CD8-positive, alpha-beta T cell (primary cell): ENCODE measurements at regions of chr12 and their contacts with region 1.

Region 1: DNA sequence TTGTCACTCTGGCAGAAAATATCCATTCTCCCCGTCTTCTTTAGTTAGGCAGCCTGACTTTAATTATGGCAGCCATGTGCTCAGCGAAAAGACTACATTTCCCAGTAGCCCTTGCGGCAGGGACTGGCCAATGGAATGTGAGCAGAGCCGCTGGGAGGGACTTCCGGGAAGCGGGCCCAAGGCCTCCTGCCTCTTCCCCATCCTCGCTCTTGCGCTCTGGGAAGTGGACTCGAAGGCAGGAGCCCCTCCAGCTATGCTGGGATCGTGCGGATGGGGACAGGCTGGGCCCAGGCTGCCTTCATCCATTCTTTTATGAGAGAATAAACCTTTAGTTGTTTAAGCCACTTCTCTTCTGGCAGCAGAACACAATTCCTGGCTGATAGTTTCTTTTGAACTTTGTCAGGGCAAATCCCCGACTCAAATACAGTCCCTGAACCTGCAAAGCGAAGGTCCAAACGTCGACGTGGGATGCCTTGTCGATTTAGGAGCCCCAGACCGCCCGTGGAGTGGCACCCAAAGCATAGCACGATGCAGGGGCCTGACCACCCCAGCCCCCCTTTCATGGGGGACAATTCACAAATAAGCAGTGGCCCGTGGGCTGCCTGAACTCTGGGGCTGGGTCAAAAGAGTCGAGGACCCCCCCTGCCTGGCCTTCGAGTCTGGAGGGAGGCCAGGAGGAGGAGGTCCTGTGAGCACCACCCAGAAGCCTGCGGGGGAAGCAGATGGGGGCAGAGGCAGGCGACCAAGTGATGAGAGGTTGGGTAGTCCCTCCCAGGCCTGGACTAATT is 15.6 kb upstream of the LRTM2 start:
- DNase-seq: peak; percentile 69 to 93 (median 87)
- ATAC-seq: peak; percentile 97
- H3K4me3 ChIP-seq: no peak overlapping the region
- H3K4me3 Mint-ChIP-seq: no peak overlapping the region
- H3K27ac ChIP-seq: peak overlapping the region in 1 of 2 experiments; percentile 66
- H3K27ac Mint-ChIP-seq: peak overlapping the region; percentile 73
- H3K4me1 ChIP-seq: peaks cover 6% of the 10 kb centered on the region
- H3K4me1 Mint-ChIP-seq: peaks cover 10% of the 10 kb centered on the region
- H3K27me3 ChIP-seq: no peaks in the 10 kb centered on the region
- H3K27me3 Mint-ChIP-seq: no peaks in the 10 kb centered on the region
- CTCF ChIP-seq: no peak

Region 2: DNA sequence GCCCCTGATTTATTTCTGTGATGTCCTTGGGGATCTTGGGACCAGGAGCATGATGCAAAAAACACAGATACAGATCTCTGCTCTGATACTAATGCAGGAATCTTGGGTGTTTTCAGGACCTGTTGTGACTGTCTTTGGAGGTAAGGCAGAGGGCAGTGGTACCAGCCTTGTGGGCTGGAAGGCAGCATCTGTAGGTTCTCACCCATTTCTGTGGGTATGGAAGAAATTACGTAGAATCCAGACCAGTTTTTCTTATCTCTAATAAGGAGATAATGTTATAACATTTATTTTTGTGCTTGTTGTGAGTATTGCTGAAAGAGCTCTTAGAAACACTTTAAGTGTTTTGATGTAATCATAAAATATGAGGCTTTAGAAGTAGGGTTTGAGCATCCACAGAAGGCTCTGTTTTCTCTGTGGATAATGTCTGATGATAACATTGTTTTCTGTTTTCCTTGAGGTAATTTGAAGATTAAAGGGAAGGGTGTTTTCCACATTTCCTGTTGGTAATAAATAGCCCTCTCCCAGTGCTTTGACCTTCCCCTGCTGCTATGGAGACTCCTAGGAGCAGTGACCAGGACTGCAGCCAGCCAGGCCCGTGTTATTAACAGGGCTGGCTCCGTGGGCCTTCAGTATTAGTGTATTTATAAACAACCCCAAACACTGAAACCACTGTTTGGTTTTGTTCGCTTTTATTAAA is 208.9 kb after region 1 on chr12:
- CTCF ChIA-PET with region 1: no interaction called
- POLR2A ChIA-PET with region 1: no interaction called
- intact Hi-C with region 1: no loop called
- DNase-seq: no peak
- ATAC-seq: no peak
- H3K4me3 ChIP-seq: no peak overlapping the region
- H3K4me3 Mint-ChIP-seq: no peak overlapping the region
- H3K27ac ChIP-seq: no peak overlapping the region
- H3K27ac Mint-ChIP-seq: no peak overlapping the region
- H3K4me1 ChIP-seq: no peaks in the 10 kb centered on the region
- H3K4me1 Mint-ChIP-seq: no peaks in the 10 kb centered on the region
- H3K27me3 ChIP-seq: no peaks in the 10 kb centered on the region
- H3K27me3 Mint-ChIP-seq: peaks cover 8% of the 10 kb centered on the region
- CTCF ChIP-seq: no peak

Region 3: GRCh38 chr12:2583091-2583497 is 778.4 kb after region 1 on chr12:
- CTCF ChIA-PET with region 1: no interaction called
- POLR2A ChIA-PET with region 1: no interaction called
- intact Hi-C with region 1: loop called (anchors 5 kb)
- DNase-seq: peak in 7 of 9 experiments; percentile 13 to 56 (median 37)
- ATAC-seq: no peak
- H3K4me3 ChIP-seq: no peak overlapping the region
- H3K4me3 Mint-ChIP-seq: no peak overlapping the region
- H3K27ac ChIP-seq: no peak overlapping the region
- H3K27ac Mint-ChIP-seq: no peak overlapping the region
- H3K4me1 ChIP-seq: peaks cover 4% of the 10 kb centered on the region
- H3K4me1 Mint-ChIP-seq: peaks cover 3% of the 10 kb centered on the region
- H3K27me3 ChIP-seq: peaks cover 2 to 7% of the 10 kb centered on the region in 2 experiments
- H3K27me3 Mint-ChIP-seq: peaks cover 47% of the 10 kb centered on the region
- CTCF ChIP-seq: peak; percentile 29